ENCODE measurements at regions of chr12 and their contacts with region 1.

Region 1: GRCh38 chr12:100234598-100235304 is 32.1 kb downstream of the DEPDC4 start:
- DNase-seq: peak; percentile 18 to 59
- ATAC-seq: peak; percentile 68 to 86
- H3K4me3 ChIP-seq: no peak overlapping the region
- H3K27ac ChIP-seq: no peak overlapping the region
- H3K4me1 ChIP-seq: peaks cover 6% of the 10 kb centered on the region; the same call in 2 of the 3 replicates
- CTCF ChIP-seq: peak; percentile 85
- EP300 ChIP-seq: no peak
- POLR2A ChIP-seq: no peak
- RAD21 ChIP-seq: peak; percentile 82 to 92

Region 2: DNA sequence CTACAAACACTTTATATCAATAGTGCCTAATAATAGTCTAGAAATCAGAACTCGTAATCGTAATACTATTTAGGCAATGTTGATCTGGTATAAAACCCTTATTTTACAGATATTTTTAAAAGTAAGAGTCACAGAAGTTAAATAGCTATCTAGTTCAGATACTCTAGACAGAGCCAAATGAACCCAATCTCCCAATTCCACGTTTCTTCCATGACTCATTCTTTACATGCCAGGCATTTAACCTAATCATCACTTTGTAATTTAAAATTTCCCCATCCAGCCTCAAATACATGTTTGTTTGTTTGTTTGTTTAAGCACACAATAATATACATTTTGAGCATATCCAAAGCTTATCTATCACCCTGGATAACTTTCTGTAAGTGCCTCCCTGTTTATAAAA is 623.6 kb before region 1 on chr12:
- CTCF ChIA-PET with region 1: no interaction called
- POLR2A ChIA-PET with region 1: no interaction called
- DNase-seq: no peak
- ATAC-seq: no peak
- H3K4me3 ChIP-seq: no peak overlapping the region
- H3K27ac ChIP-seq: no peak overlapping the region
- H3K4me1 ChIP-seq: no peaks in the 10 kb centered on the region
- CTCF ChIP-seq: no peak
- EP300 ChIP-seq: no peak
- POLR2A ChIP-seq: no peak
- RAD21 ChIP-seq: no peak

Region 3: DNA sequence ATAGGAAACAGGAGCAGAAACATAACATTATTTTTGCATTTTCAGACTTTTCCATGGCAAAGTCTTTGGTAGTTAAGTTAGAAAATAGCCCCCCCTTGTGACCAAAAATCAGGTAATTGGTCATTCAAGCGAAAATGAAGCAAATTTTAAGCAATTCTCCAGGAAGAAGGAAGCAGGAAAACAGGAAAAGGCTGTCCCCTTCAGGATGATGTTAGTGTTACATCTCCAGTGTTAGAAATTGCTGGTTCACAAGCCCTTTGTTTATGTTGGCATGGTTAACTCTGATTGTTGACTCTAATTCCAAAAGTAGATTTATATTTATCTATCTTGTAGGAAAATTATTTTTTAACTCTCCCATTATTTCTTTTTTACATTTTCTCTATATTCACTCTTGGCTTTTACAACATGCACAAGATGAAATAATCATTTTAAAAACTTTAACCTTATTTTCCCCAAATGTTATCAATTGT is 319.9 kb after region 1 on chr12:
- CTCF ChIA-PET with region 1: interaction called, 12 read pairs
- POLR2A ChIA-PET with region 1: no interaction called
- DNase-seq: peak; percentile 68 to 89
- ATAC-seq: peak; percentile 91 to 94
- H3K4me3 ChIP-seq: no peak overlapping the region
- H3K27ac ChIP-seq: no peak overlapping the region
- H3K4me1 ChIP-seq: peaks cover 11% of the 10 kb centered on the region; the same call in 2 of the 3 replicates
- CTCF ChIP-seq: peak; percentile 99
- EP300 ChIP-seq: no peak
- POLR2A ChIP-seq: no peak
- RAD21 ChIP-seq: peak; percentile 99

Region 4: GRCh38 chr12:100733817-100734593 is 499.3 kb after region 1 on chr12:
- CTCF ChIA-PET with region 1: interaction called, 13 read pairs
- POLR2A ChIA-PET with region 1: no interaction called
- DNase-seq: peak; percentile 17 to 60
- ATAC-seq: peak in 1 of 2 experiments; percentile 87; a peak in 3 of 6 replicates
- H3K4me3 ChIP-seq: no peak overlapping the region
- H3K27ac ChIP-seq: no peak overlapping the region
- H3K4me1 ChIP-seq: no peaks in the 10 kb centered on the region
- CTCF ChIP-seq: peak; percentile 64
- EP300 ChIP-seq: no peak
- POLR2A ChIP-seq: no peak
- RAD21 ChIP-seq: peak; percentile 54 to 60